H1 (cell line): ENCODE measurements at regions of chr11 and their contacts with region 1.

Region 1: GRCh38 chr11:67382276-67383136 is 9.1 kb upstream of the CLCF1 start:
- DNase-seq: peak in 1 of 2 experiments; percentile 94
- H3K4me3 ChIP-seq: no peak overlapping the region
- H3K27ac ChIP-seq: no peak overlapping the region
- H3K4me1 ChIP-seq: peaks cover 0 to 11% (median 5%) of the 10 kb centered on the region in 4 experiments; a peak in 5 of 7 replicates
- H3K27me3 ChIP-seq: peaks cover 0 to 16% (median 10%) of the 10 kb centered on the region in 4 experiments; a peak in 5 of 7 replicates
- CTCF ChIP-seq: peak; percentile 95 to 99 (median 98)
- EP300 ChIP-seq: no peak
- POLR2A ChIP-seq: no peak
- RAD21 ChIP-seq: peak; percentile 99 to 100

Region 2: DNA sequence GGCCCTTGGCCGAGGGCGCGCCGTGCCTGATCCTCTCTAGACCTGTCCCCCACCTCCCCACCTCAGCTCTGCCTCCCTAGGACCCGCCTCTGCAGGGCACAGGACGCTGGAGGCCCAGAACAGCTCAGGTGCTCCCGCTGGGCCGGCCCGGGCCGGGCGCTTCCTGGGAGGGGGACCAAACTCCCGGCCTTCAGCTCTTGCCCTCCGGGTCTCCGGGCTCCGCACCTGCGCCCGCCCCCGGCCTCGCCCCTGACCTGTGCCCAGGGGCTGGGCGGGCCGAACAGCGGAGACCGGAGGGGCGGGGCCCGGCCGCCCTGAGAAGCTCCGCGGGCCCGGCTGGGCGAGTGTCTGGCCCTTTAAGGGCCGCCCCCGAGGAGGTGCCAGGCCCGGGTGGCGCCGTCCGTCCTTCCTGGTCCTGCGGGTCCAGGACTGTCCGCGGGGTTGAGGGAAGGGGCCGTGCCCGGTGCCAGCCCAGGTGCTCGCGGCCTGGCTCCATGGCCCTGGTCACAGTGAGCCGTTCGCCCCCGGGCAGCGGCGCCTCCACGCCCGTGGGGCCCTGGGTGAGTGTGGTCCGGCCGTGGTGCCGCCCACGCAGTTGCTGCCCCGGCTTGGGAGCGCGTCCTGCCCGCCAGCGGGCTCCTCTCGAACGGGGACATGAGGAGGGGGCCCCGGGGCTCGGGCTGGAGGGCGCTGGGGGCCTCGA is 79.2 kb before region 1 on chr11 and contains the start of gene SSH3:
- CTCF ChIA-PET with region 1: interaction called, 11 read pairs
- POLR2A ChIA-PET with region 1: no interaction called
- DNase-seq: peak in 1 of 2 experiments; percentile 46
- H3K4me3 ChIP-seq: peak within 1 kb of the TSS; percentile 67 to 94 (median 74)
- H3K27ac ChIP-seq: no peak within 1 kb of the TSS
- H3K4me1 ChIP-seq: peaks cover 0 to 20% (median 16%) of the 10 kb centered on the region in 4 experiments; a peak in 5 of 7 replicates
- H3K27me3 ChIP-seq: peaks cover 0 to 11% (median 7%) of the 10 kb centered on the region in 4 experiments; a peak in 5 of 7 replicates
- CTCF ChIP-seq: no peak
- EP300 ChIP-seq: no peak
- POLR2A ChIP-seq: no peak; a peak in 1 of 3 replicates
- RAD21 ChIP-seq: no peak
- total RNA-seq, gene SSH3: 19.8 and 23.6 TPM in 2 replicates

Region 3: DNA sequence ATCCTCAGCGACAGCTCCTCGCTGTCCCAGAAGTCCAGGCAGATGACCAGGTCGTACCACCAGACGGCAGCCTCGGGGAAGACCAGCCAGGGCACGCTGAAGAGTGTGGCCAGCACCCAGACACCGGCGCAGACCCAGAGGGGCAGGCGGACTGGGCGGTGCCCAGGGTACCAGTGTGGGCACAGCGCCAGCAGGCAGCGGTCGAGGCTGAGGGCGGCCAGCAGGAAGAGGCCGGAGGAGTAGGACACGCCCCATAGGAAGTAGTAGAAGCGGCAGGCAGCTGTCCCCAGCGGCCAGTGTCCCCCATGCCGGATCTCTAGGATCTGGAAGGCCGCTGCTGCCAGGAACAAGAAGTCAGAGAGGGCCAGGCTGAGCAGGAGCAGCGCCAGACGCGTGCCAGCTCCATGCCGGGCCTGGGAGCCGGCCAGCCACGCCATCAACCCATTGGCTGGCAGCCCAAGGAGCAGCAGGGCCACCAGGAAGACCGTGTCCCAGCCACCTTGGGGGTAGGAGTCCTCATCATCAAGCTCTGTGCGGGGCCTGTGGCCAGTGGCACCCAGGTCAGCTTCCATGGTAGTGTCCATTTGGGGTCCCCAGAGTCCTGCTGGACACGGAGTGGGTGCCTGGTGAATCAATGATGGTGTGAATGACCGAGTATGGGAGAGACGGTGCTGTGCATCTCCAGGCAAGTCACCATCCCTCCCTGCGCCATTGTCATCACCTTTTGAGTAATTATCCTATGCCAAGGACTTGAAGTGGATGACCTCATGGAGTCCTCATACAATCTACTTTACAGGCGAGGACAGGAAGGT is 69.8 kb after region 1 on chr11 and contains the start of gene GPR152:
- CTCF ChIA-PET with region 1: interaction called, 10 read pairs
- POLR2A ChIA-PET with region 1: no interaction called
- DNase-seq: no peak
- H3K4me3 ChIP-seq: no peak within 1 kb of the TSS
- H3K27ac ChIP-seq: no peak within 1 kb of the TSS
- H3K4me1 ChIP-seq: no peaks in the 10 kb centered on the region
- H3K27me3 ChIP-seq: no peaks in the 10 kb centered on the region
- CTCF ChIP-seq: no peak
- EP300 ChIP-seq: no peak
- POLR2A ChIP-seq: no peak
- RAD21 ChIP-seq: no peak
- total RNA-seq, gene GPR152: not detected in 2 replicates